A673 (cell line): ENCODE measurements at regions of chr5 and their contacts with region 1.

Region 1: GRCh38 chr5:142386137-142387032 is 61.6 kb upstream of the SPRY4 start:
- DNase-seq: peak; percentile 63
- H3K4me3 ChIP-seq: no peak overlapping the region
- H3K27ac ChIP-seq: peak overlapping the region; percentile 84
- H3K4me1 ChIP-seq: peaks cover 48% of the 10 kb centered on the region
- H3K27me3 ChIP-seq: no peaks in the 10 kb centered on the region
- CTCF ChIP-seq: no peak

Region 2: DNA sequence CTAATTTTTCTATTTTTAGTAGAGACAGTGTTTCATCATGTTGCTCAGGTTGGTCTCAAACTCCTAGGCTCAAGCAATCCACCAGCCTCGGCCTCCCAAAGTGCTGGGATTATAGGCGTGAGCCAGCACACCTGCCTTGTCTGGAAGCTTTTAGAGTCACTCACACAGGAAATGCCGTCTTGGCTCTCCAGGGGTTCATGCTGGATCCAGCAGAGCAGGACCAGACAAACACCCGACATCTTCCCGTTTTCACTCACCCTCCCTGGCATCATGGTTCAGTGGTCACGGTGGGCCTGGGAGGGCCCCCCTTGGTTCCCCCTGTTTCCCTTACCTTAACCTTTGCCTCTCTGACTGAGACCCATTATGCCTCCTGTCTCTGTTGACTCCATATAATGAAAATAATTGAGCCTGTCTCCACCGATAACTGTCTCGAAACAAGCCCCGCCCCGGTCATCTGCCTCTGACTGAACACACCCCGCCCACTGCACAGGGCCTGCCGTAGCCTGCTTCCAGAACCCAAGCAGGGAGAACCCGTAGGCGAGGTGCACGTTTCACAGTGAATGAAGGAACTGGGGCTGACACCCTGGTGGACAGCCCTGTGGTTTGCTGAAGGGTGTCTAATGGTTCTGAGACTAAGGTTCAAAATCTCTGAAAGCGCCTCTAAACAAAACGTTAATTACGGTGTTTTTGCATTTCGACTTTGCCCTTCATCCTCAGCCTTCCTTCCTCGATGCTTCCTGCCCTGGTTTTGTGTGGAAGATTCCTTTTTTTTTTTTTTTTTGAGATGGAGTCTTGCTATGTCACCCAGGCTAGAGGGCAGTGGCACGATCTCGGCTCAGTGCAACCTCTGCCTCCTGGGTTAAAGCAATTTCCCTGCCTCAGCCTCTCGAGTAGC is 21.9 kb before region 1 on chr5:
- CTCF ChIA-PET with region 1: no interaction called
- POLR2A ChIA-PET with region 1: no interaction called
- intact Hi-C with region 1: loop called (anchors 2 kb)
- DNase-seq: peak; percentile 91
- H3K4me3 ChIP-seq: peak overlapping the region; percentile 39
- H3K27ac ChIP-seq: peak overlapping the region; percentile 84
- H3K4me1 ChIP-seq: peaks cover 54% of the 10 kb centered on the region
- H3K27me3 ChIP-seq: no peaks in the 10 kb centered on the region
- CTCF ChIP-seq: no peak

Region 3: DNA sequence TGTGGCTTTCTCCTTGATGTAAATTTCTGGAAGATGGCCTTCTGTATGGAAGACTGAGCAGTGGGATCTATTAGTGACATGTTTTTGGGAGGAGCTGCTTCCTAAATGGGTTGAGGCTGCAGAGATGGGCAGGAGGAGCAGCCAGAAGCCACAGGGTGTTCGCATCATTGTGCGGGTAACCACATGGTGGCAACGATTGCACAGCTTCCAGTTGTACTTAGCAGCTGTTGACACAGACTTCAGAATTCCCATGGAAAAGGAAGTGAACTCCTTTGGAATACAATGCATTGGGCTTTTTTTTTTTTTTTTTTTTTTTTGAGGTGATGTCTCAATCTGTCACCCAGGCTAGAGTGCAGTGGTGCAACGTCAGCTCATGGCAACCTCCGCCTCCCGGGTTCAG is 719.8 kb after region 1 on chr5:
- CTCF ChIA-PET with region 1: no interaction called
- POLR2A ChIA-PET with region 1: no interaction called
- intact Hi-C with region 1: no loop called
- DNase-seq: peak; percentile 60
- H3K4me3 ChIP-seq: no peak overlapping the region
- H3K27ac ChIP-seq: no peak overlapping the region
- H3K4me1 ChIP-seq: no peaks in the 10 kb centered on the region
- H3K27me3 ChIP-seq: no peaks in the 10 kb centered on the region
- CTCF ChIP-seq: peak; percentile 48